GM12878 (cell line): ENCODE measurements at regions of chr3 and their contacts with region 1.

Region 1: GRCh38 chr3:146065573-146066006 is 95.4 kb downstream of the PLOD2 start:
- DNase-seq: no peak
- ATAC-seq: no peak
- H3K4me3 ChIP-seq: no peak overlapping the region
- H3K27ac ChIP-seq: no peak overlapping the region
- H3K4me1 ChIP-seq: no peaks in the 10 kb centered on the region
- H3K27me3 ChIP-seq: no peaks in the 10 kb centered on the region
- CTCF ChIP-seq: peak; percentile 44 to 56 (median 50)
- EP300 ChIP-seq: no peak
- POLR2A ChIP-seq: no peak
- RAD21 ChIP-seq: peak; percentile 62

Region 2: DNA sequence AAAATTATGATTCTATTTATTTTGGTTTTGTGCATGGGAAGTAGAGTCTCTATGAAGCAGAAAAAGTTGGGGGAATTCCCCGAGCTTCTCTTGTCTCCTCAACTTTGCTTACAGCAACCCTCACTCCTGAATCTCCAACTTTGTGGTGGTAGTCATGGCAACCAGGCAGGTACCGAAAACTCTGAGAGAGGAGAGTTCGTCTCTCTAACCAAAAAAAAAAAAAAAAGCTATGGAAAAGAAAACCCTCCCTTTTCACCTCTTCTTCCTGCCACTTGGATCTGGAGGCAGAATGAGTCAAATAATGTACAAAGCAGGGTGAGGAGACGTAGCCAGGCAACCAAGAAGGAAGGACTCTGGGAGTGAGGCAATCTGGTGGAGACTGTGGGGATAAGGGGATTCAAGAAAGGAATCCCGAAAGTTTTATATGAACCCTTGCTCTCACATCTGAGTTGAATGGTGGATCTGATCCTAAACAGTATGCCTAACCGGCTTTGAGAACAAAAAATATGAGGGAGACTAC is 12.7 kb before region 1 on chr3:
- CTCF ChIA-PET with region 1: interaction called, 20 read pairs
- POLR2A ChIA-PET with region 1: no interaction called
- RAD21 ChIA-PET with region 1: interaction called, 6 read pairs
- SMC1A ChIA-PET with region 1: interaction called, 6 read pairs
- in situ Hi-C with region 1: no loop called
- intact Hi-C with region 1: no loop called
- DNase-seq: no peak
- ATAC-seq: no peak
- H3K4me3 ChIP-seq: no peak overlapping the region
- H3K27ac ChIP-seq: no peak overlapping the region
- H3K4me1 ChIP-seq: no peaks in the 10 kb centered on the region
- H3K27me3 ChIP-seq: no peaks in the 10 kb centered on the region; a peak in 1 of 4 replicates
- CTCF ChIP-seq: no peak
- EP300 ChIP-seq: no peak
- POLR2A ChIP-seq: no peak
- RAD21 ChIP-seq: no peak

Region 3: GRCh38 chr3:146172563-146172962 is 107.0 kb after region 1 on chr3:
- CTCF ChIA-PET with region 1: no interaction called
- POLR2A ChIA-PET with region 1: no interaction called
- RAD21 ChIA-PET with region 1: no interaction called
- SMC1A ChIA-PET with region 1: no interaction called
- in situ Hi-C with region 1: no loop called
- intact Hi-C with region 1: no loop called
- DNase-seq: no peak
- ATAC-seq: no peak
- H3K4me3 ChIP-seq: no peak overlapping the region
- H3K27ac ChIP-seq: no peak overlapping the region
- H3K4me1 ChIP-seq: no peaks in the 10 kb centered on the region
- H3K27me3 ChIP-seq: no peaks in the 10 kb centered on the region
- CTCF ChIP-seq: no peak
- EP300 ChIP-seq: no peak
- POLR2A ChIP-seq: no peak
- RAD21 ChIP-seq: no peak

Region 4: GRCh38 chr3:146184616-146185015 is 119.0 kb after region 1 on chr3:
- CTCF ChIA-PET with region 1: interaction called, 63 read pairs
- POLR2A ChIA-PET with region 1: no interaction called
- RAD21 ChIA-PET with region 1: interaction called, 47 read pairs
- SMC1A ChIA-PET with region 1: interaction called, 34 read pairs
- in situ Hi-C with region 1: no loop called
- intact Hi-C with region 1: loop called (anchors 5 kb)
- DNase-seq: no peak
- ATAC-seq: no peak
- H3K4me3 ChIP-seq: no peak overlapping the region
- H3K27ac ChIP-seq: no peak overlapping the region
- H3K4me1 ChIP-seq: no peaks in the 10 kb centered on the region
- H3K27me3 ChIP-seq: no peaks in the 10 kb centered on the region
- CTCF ChIP-seq: no peak
- EP300 ChIP-seq: no peak
- POLR2A ChIP-seq: no peak
- RAD21 ChIP-seq: no peak

Region 5: DNA sequence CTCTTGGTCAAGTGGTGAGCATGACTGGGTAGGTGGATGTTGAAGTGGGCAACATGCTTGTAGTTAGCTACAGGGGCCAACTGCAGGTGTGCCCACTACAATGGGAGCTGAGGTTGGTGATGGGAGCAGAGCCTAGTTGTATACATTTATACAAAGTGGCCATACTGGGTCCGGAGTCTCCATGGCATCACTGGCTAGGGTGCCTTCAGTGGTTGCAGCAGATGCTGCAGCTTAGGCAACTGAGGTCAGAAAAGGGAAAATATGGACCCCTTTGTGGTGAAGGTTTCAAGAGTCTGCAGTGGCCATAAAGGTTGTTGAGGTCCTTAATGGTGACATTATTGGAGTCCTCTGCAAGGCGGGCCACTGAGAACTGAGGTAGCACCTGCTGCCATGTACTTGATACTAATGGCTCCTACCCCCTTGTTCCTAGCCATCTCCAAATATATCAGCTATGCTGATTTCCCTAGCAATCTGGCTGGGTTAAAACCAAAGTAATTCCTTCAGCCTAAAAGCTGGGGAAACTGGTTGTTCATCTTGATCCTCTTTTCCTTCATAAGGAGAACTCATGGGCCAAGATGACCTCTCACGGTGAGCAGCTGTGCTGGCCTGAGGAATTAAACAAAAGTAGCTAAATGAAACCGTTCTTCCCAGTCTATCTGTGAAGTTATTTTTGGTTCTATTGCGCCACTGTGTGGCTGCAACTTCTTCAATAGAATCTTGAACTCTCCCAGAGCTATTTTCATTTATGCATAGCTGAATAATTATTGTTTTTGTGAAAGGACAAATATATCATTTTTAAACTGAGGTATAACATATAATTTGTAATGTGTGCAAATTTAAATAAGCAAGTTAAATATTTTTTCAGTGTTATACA is 261.3 kb after region 1 on chr3:
- CTCF ChIA-PET with region 1: interaction called, 7 read pairs
- POLR2A ChIA-PET with region 1: no interaction called
- RAD21 ChIA-PET with region 1: interaction called, 11 read pairs
- SMC1A ChIA-PET with region 1: interaction called, 6 read pairs
- in situ Hi-C with region 1: no loop called
- intact Hi-C with region 1: no loop called
- DNase-seq: no peak
- ATAC-seq: 0 out of 3 replicates have a peak, but pooled peaks have one; percentile 37
- H3K4me3 ChIP-seq: no peak overlapping the region
- H3K27ac ChIP-seq: no peak overlapping the region
- H3K4me1 ChIP-seq: no peaks in the 10 kb centered on the region
- H3K27me3 ChIP-seq: no peaks in the 10 kb centered on the region
- CTCF ChIP-seq: peak in 1 of 3 experiments; percentile 22; a peak in 2 of 6 replicates
- EP300 ChIP-seq: no peak
- POLR2A ChIP-seq: no peak
- RAD21 ChIP-seq: peak; percentile 24; the same call in 1 of the 2 replicates

Region 6: GRCh38 chr3:146589899-146590508 is 524.4 kb after region 1 on chr3:
- CTCF ChIA-PET with region 1: interaction called, 14 read pairs
- POLR2A ChIA-PET with region 1: no interaction called
- RAD21 ChIA-PET with region 1: interaction called, 11 read pairs
- SMC1A ChIA-PET with region 1: no interaction called
- in situ Hi-C with region 1: loop called (anchors 25 kb)
- intact Hi-C with region 1: no loop called
- DNase-seq: no peak
- ATAC-seq: peak; percentile 65
- H3K4me3 ChIP-seq: no peak overlapping the region
- H3K27ac ChIP-seq: no peak overlapping the region
- H3K4me1 ChIP-seq: no peaks in the 10 kb centered on the region
- H3K27me3 ChIP-seq: no peaks in the 10 kb centered on the region
- CTCF ChIP-seq: peak; percentile 30 to 51 (median 38); a peak in 5 of 6 replicates
- EP300 ChIP-seq: no peak
- POLR2A ChIP-seq: no peak
- RAD21 ChIP-seq: peak; percentile 48; the same call in 1 of the 2 replicates